ENCODE measurements at regions of chr9 and their contacts with region 1.

Region 1: DNA sequence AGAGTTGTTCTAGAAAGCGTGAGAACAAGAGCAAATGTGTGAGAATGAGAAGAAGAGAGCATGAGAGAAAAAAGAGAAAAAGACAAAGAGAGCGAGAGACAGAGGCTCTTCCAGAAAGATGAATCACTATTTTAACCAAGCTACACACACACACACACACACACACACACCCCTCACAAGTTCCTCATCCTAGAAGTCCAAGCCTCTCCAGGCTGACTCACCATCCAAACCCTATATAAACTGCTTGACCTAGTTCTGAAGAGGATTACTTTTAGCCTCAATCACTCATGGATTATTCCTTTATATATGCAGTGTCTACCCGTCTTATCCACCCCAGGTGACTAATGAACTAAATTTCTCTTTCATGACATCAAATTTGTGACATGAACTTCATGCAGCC is 37.6 kb downstream of the C9orf57 start:
- DNase-seq: no peak
- ATAC-seq: peak; percentile 67

Region 2: GRCh38 chr9:71806901-71807307 is 215.9 kb before region 1 on chr9:
- intact Hi-C with region 1: loop called (anchors 10 kb)
- DNase-seq: peak; percentile 55 to 60
- ATAC-seq: peak; percentile 96

Measured in left colon (tissue), 2 donors.